Activated CD8-positive, alpha-beta memory T cell treated with anti-CD3 and anti-CD28 coated beads, Interleukin-2, amount 10 ng/mL, durations not matched to agents 7 days and 5 days (primary cell): ENCODE measurements at regions of chr19 and their contacts with region 1.

Region 1: GRCh38 chr19:10194500-10195289 is at the start of gene DNMT1:
- DNase-seq: peak; percentile 99
- ATAC-seq: peak; percentile 96
- H3K4me3 Mint-ChIP-seq: peak within 1 kb of the TSS; percentile 92
- H3K27ac Mint-ChIP-seq: peak within 1 kb of the TSS; percentile 94
- H3K4me1 Mint-ChIP-seq: peaks cover 51% of the 10 kb centered on the region
- H3K27me3 Mint-ChIP-seq: no peaks in the 10 kb centered on the region
- total RNA-seq, gene DNMT1: 433 to 500 TPM

Region 2: DNA sequence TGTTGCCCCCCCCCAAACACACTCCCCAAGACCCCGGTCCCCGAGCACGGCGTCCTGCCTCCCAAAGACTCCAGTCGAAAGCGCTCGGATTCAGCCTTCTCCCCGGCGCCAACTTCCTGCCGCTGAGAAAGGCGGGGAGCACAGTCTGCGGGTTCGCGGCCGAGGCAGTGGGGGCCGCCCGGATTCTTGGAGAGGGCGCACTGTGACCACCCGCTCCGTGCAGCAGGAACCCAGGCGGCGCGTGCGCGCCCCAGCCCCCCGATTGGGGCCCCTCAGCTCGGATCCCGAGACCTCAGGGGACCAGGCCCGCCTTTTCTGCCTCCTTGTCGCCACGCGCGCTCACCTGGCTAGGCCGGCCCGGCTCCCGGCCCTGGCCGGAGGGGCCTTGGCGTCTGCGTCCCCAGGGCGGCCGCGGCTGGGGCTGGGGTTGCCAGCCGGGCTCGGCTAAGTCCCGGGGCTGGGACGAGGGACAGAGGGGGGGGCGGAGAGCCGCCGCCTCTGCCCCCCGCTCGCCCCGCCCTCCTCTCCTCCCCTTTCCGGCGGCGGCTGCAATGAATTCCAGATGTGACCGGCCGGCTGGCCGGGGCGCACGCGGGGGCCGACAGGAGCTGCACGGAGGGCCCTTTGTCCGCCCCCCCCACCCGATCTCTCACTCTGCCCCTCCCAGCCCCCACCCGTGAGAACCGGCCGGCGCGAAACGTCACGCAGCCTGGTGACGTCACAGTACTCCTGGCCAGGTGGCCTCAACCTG is 36.3 kb after region 1 on chr19 and contains the start of gene S1PR2:
- CTCF ChIA-PET with region 1: interaction called, 14 read pairs
- DNase-seq: peak; percentile 77
- ATAC-seq: peak; percentile 69
- H3K4me3 Mint-ChIP-seq: peak within 1 kb of the TSS; percentile 81
- H3K27ac Mint-ChIP-seq: peak within 1 kb of the TSS; percentile 69
- H3K4me1 Mint-ChIP-seq: peaks cover 26% of the 10 kb centered on the region
- H3K27me3 Mint-ChIP-seq: no peaks in the 10 kb centered on the region
- total RNA-seq, gene S1PR2: 6.1 to 8.5 TPM